ENCODE measurements at regions of chr15 and their contacts with region 1.

Region 1: GRCh38 chr15:57340682-57341259 is 35.5 kb upstream of the CGNL1 start:
- DNase-seq: no peak
- ATAC-seq: peak; percentile 79
- H3K4me3 ChIP-seq: no peak overlapping the region
- H3K27ac ChIP-seq: no peak overlapping the region
- H3K4me1 ChIP-seq: no peaks in the 10 kb centered on the region
- H3K27me3 ChIP-seq: no peaks in the 10 kb centered on the region

Region 2: GRCh38 chr15:57263520-57263919 is 77.3 kb before region 1 on chr15:
- intact Hi-C with region 1: no loop called
- DNase-seq: no peak
- ATAC-seq: no peak
- H3K4me3 ChIP-seq: no peak overlapping the region
- H3K27ac ChIP-seq: no peak overlapping the region
- H3K4me1 ChIP-seq: peaks cover 0 to 3% of the 10 kb centered on the region in 2 donors
- H3K27me3 ChIP-seq: no peaks in the 10 kb centered on the region

Region 3: DNA sequence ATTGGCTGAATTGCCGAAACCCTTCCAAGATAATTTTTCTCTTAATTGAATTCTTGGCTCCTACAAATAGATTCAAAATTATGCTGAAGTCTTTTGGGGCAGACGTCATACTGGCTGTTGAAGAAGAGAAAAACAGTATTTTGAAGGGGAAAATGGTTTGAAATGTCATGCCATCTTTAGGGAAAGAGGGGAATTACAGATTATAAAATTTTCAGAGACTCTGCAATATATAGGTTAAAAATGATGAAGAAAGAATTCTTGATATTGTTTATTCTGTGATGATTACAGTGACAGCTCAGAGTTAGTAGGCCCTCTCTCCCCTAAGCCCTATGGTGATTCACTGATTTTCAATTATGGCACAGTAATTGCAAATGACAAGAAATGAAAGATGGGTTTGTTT is 121.6 kb after region 1 on chr15:
- intact Hi-C with region 1: loop called in 1 of 2 experiments (anchors 10 kb)
- DNase-seq: no peak
- ATAC-seq: no peak
- H3K4me3 ChIP-seq: no peak overlapping the region
- H3K27ac ChIP-seq: no peak overlapping the region
- H3K4me1 ChIP-seq: peaks cover 0 to 3% of the 10 kb centered on the region in 2 donors
- H3K27me3 ChIP-seq: no peaks in the 10 kb centered on the region

Region 4: GRCh38 chr15:57527382-57528091 is 186.8 kb after region 1 on chr15:
- intact Hi-C with region 1: loop called (anchors 1 kb)
- DNase-seq: peak in 1 of 2 donors; percentile 48
- ATAC-seq: peak; percentile 70
- H3K4me3 ChIP-seq: no peak overlapping the region
- H3K27ac ChIP-seq: no peak overlapping the region
- H3K4me1 ChIP-seq: no peaks in the 10 kb centered on the region
- H3K27me3 ChIP-seq: no peaks in the 10 kb centered on the region

Region 5: DNA sequence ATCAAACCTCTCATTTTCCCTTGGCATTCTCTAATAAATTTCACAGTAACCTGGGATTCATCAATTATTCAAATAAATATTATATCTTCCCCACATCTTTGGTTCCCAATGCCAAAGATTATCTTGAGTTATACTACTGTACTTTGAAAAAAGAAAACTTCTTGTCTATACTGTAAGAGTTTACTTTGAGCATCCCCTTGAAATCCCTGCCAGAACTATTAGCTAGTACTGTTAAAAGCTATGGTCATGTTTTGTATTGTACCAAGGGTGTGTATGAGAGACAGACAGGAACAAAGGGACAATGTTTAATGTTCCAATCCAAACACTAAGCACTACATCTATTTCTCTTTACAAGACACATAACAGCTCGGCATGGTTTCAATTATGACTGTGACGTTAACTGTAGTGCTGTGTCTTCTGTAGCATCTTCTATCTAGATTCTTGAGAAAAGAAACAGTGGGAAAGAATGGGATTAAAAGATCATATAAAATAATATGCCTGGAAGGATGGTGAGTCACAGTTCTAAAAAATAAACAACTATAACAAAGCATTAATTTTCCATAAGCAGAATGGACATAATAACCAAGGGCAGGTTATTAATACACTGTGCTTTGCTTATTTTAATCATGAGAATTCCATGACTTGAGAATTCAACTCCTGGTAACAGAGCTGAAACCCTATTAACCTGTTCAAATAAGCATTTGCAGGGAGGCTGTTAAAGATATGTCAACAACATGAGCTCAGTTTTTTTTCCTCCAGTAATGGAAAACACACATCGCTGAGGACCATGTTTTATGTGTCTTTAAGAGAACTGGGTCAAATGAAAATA is 653.7 kb after region 1 on chr15:
- intact Hi-C with region 1: no loop called
- DNase-seq: no peak
- ATAC-seq: no peak
- H3K4me3 ChIP-seq: no peak overlapping the region
- H3K27ac ChIP-seq: no peak overlapping the region
- H3K4me1 ChIP-seq: no peaks in the 10 kb centered on the region
- H3K27me3 ChIP-seq: no peaks in the 10 kb centered on the region